MCF 10A (cell line): ENCODE measurements at regions of chr22 and their contacts with region 1.

Region 1: GRCh38 chr22:30104501-30105156 is 24.4 kb downstream of the HORMAD2 start:
- DNase-seq: no peak
- H3K4me3 Mint-ChIP-seq: no peak overlapping the region
- H3K27ac Mint-ChIP-seq: no peak overlapping the region
- H3K4me1 Mint-ChIP-seq: peaks cover 6% of the 10 kb centered on the region
- H3K27me3 Mint-ChIP-seq: no peaks in the 10 kb centered on the region
- CTCF ChIP-seq: no peak

Region 2: DNA sequence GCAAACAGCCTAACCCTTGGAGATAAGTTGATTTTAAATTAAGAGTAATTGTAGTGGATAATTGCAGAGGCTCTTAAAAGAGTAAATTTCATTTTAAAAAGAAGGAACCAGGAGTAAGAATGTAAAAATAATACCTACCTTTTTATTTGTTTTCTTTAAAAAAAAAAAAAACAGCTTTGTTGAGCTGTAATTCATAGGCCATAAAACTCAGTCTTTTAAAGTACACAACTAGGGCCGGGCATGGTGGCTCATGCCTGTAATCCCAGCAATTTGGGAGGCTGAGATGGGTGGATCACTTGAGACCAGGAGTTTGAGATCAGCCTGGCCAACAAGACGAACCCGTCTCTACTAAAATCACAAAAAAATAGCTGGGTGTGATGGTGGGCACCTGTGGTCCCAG is 179.2 kb before region 1 on chr22:
- CTCF ChIA-PET with region 1: no interaction called
- POLR2A ChIA-PET with region 1: no interaction called
- intact Hi-C with region 1: no loop called
- DNase-seq: no peak
- H3K4me3 Mint-ChIP-seq: no peak overlapping the region
- H3K27ac Mint-ChIP-seq: no peak overlapping the region
- H3K4me1 Mint-ChIP-seq: no peaks in the 10 kb centered on the region
- H3K27me3 Mint-ChIP-seq: no peaks in the 10 kb centered on the region
- CTCF ChIP-seq: no peak

Region 3: GRCh38 chr22:30121960-30122359 is 17.3 kb after region 1 on chr22:
- CTCF ChIA-PET with region 1: interaction called, 15 read pairs
- POLR2A ChIA-PET with region 1: no interaction called
- intact Hi-C with region 1: no loop called
- DNase-seq: no peak
- H3K4me3 Mint-ChIP-seq: no peak overlapping the region
- H3K27ac Mint-ChIP-seq: no peak overlapping the region
- H3K4me1 Mint-ChIP-seq: no peaks in the 10 kb centered on the region
- H3K27me3 Mint-ChIP-seq: no peaks in the 10 kb centered on the region
- CTCF ChIP-seq: no peak

Region 4: GRCh38 chr22:30253205-30253852 is 148.7 kb after region 1 on chr22:
- CTCF ChIA-PET with region 1: interaction called, 5 read pairs
- POLR2A ChIA-PET with region 1: no interaction called
- intact Hi-C with region 1: loop called (anchors 1 kb)
- DNase-seq: no peak
- H3K4me3 Mint-ChIP-seq: no peak overlapping the region
- H3K27ac Mint-ChIP-seq: no peak overlapping the region
- H3K4me1 Mint-ChIP-seq: peaks cover 12% of the 10 kb centered on the region
- H3K27me3 Mint-ChIP-seq: no peaks in the 10 kb centered on the region
- CTCF ChIP-seq: no peak

Region 5: GRCh38 chr22:30262917-30263741 is 158.5 kb after region 1 on chr22:
- CTCF ChIA-PET with region 1: interaction called, 12 read pairs
- POLR2A ChIA-PET with region 1: no interaction called
- intact Hi-C with region 1: no loop called
- DNase-seq: peak; percentile 64
- H3K4me3 Mint-ChIP-seq: peak overlapping the region; percentile 47
- H3K27ac Mint-ChIP-seq: no peak overlapping the region
- H3K4me1 Mint-ChIP-seq: peaks cover 6% of the 10 kb centered on the region
- H3K27me3 Mint-ChIP-seq: no peaks in the 10 kb centered on the region
- CTCF ChIP-seq: peak; percentile 99